CD8-positive, alpha-beta memory T cell (primary cell): ENCODE measurements at regions of chr12 and their contacts with region 1.

Region 1: DNA sequence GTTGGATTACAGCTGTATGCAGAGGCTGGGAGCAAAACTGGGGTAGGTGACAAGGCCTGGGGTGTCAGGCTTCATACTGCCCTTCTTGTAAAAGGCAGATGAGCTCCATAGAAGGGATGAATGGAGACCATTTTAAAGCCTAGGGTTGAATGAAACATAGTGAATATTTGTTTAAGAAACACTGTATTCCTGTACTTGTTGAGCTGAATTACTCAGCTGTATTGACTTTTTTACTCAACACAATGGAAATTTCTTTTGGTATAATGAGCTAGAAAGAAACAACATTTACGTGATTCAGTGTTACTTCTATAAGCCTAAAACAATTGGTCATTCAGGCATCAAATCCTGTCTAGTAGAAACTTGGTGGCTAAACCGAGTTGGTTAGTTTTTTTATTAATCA is 14.1 kb downstream of the ATP6V0A2 start:
- DNase-seq: no peak
- H3K4me3 ChIP-seq: no peak overlapping the region
- H3K4me3 Mint-ChIP-seq: no peak overlapping the region
- H3K27ac ChIP-seq: no peak overlapping the region
- H3K27ac Mint-ChIP-seq: peak overlapping the region in 3 of 8 donors; percentile 28 to 81 (median 57)
- H3K4me1 ChIP-seq: no peaks in the 10 kb centered on the region
- H3K4me1 Mint-ChIP-seq: peaks cover 3 to 20% (median 6%) of the 10 kb centered on the region in 3 donors
- H3K27me3 ChIP-seq: no peaks in the 10 kb centered on the region
- H3K27me3 Mint-ChIP-seq: no peaks in the 10 kb centered on the region

Region 2: DNA sequence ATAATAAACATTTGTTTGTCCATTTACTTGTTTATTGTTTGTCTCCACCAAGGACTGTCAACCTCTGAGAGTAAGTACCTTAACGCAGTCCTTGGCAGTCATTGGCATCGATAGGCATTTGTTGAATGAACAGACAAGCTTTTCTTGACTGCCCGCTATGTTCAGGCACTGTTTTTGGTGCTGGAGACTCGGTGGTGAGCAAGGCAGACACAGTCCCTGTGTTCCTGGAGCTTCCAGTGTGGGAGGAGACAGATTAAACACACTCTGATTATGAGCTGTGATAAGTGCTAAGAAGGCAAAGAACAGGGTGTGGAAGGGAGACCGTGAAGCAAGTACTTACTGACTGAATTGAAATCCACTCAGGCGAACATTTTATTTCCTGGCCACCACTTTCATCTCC is 12.8 kb before region 1 on chr12:
- CTCF ChIA-PET with region 1: interaction called, 3 read pairs
- POLR2A ChIA-PET with region 1: interaction called, 10 read pairs
- DNase-seq: no peak
- H3K4me3 ChIP-seq: peak overlapping the region; percentile 87
- H3K4me3 Mint-ChIP-seq: peak overlapping the region; percentile 82 to 96 (median 89)
- H3K27ac ChIP-seq: peak overlapping the region; percentile 75
- H3K27ac Mint-ChIP-seq: peak overlapping the region; percentile 62 to 90 (median 82)
- H3K4me1 ChIP-seq: peaks cover 36% of the 10 kb centered on the region
- H3K4me1 Mint-ChIP-seq: peaks cover 35 to 46% (median 35%) of the 10 kb centered on the region in 3 donors
- H3K27me3 ChIP-seq: no peaks in the 10 kb centered on the region
- H3K27me3 Mint-ChIP-seq: no peaks in the 10 kb centered on the region

Region 3: GRCh38 chr12:123748661-123749060 is 22.4 kb after region 1 on chr12:
- CTCF ChIA-PET with region 1: no interaction called
- POLR2A ChIA-PET with region 1: no interaction called
- DNase-seq: no peak
- H3K4me3 ChIP-seq: no peak overlapping the region
- H3K4me3 Mint-ChIP-seq: no peak overlapping the region
- H3K27ac ChIP-seq: no peak overlapping the region
- H3K27ac Mint-ChIP-seq: no peak overlapping the region
- H3K4me1 ChIP-seq: peaks cover 9% of the 10 kb centered on the region
- H3K4me1 Mint-ChIP-seq: peaks cover 0 to 9% (median 8%) of the 10 kb centered on the region in 3 donors
- H3K27me3 ChIP-seq: no peaks in the 10 kb centered on the region
- H3K27me3 Mint-ChIP-seq: peaks cover 0 to 1% of the 10 kb centered on the region in 2 donors